Caco-2 (cell line): ENCODE measurements at regions of chr12 and their contacts with region 1.

Region 1: GRCh38 chr12:58302485-58303011 is 361.2 kb downstream of the ATP23 start:
- DNase-seq: peak in 1 of 2 experiments; percentile 4
- H3K4me3 ChIP-seq: no peak overlapping the region
- H3K4me3 Mint-ChIP-seq: no peak overlapping the region
- H3K27ac Mint-ChIP-seq: no peak overlapping the region
- H3K4me1 ChIP-seq: no peaks in the 10 kb centered on the region; the same call in 1 of the 2 replicates
- H3K4me1 Mint-ChIP-seq: no peaks in the 10 kb centered on the region
- H3K27me3 ChIP-seq: no peaks in the 10 kb centered on the region
- H3K27me3 Mint-ChIP-seq: no peaks in the 10 kb centered on the region
- CTCF ChIP-seq: peak in 1 of 2 experiments; percentile 26

Region 2: DNA sequence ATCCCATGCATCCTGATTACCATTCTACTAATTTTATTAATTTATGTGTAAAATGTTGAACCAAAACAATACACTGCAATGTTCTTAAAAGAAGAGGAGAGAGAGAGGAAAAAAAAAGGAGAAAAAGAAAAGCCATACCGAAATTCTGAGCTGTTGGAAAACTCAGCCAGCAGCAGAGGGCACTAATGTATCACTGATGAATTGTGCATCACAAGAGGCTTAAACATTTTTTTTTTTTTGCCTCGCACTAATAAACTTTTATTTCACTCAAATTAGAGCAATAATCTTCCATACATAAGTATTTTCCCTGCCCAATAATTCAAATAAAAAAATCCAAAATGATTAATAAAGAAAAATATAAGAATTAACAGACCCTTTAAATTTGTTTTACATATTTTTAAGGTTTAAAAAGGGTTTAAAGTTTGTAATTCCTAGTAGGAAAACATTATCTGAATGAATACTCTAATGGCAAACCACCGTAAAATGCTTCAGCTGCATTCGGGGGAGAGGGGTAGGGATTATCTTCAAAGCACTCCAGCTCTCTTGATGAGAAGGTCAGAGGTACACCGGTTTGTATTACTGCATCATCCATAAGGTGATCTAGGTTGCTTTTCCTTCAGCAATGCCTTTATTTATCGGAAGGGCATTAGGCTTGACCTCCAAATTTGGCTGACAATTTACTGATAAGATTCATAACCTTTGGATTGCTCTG is 319.2 kb before region 1 on chr12:
- CTCF ChIA-PET with region 1: interaction called, 4 read pairs
- POLR2A ChIA-PET with region 1: no interaction called
- intact Hi-C with region 1: loop called (anchors 2 kb)
- DNase-seq: peak in 1 of 2 experiments; percentile 50
- H3K4me3 ChIP-seq: no peak overlapping the region
- H3K4me3 Mint-ChIP-seq: no peak overlapping the region
- H3K27ac Mint-ChIP-seq: no peak overlapping the region
- H3K4me1 ChIP-seq: no peaks in the 10 kb centered on the region
- H3K4me1 Mint-ChIP-seq: no peaks in the 10 kb centered on the region
- H3K27me3 ChIP-seq: no peaks in the 10 kb centered on the region
- H3K27me3 Mint-ChIP-seq: no peaks in the 10 kb centered on the region
- CTCF ChIP-seq: peak; percentile 33 to 65